KBM-7 (cell line): ENCODE measurements at regions of chr12 and their contacts with region 1.

Region 1: GRCh38 chr12:52380271-52380694 is 5.2 kb downstream of the KRT84 start:
- DNase-seq: peak; percentile 17

Region 2: DNA sequence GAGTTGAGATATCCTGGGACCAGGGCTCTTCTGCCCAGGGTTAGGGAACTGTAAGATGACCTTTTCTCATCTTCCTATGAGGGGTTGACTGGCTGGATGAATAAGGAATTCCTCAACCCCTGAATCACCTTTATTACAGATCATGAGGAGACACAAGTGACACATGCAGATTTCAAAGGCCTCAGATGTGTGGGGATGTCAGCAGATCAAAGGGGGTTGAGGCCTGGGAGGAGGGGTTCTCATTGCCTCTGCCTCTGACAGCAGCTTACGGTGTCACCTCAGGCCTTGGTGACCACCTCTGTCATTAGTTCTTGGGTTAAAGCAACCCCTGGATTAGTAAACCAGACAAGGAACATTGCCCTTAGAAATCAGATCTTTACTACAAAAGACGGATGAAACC is 223.0 kb after region 1 on chr12:
- in situ Hi-C with region 1: no loop called
- DNase-seq: no peak

Region 3: GRCh38 chr12:52980693-52981423 is 600.6 kb after region 1 on chr12:
- in situ Hi-C with region 1: loop called (anchors 25 kb)
- DNase-seq: peak; percentile 94